Activated CD4-positive, alpha-beta T cell treated with anti-CD3 and anti-CD28 coated beads, Interleukin-2, amount 10 ng/mL, durations not matched to agents 24 days and 14 days (primary cell): ENCODE measurements at regions of chr21 and their contacts with region 1.

Region 1: DNA sequence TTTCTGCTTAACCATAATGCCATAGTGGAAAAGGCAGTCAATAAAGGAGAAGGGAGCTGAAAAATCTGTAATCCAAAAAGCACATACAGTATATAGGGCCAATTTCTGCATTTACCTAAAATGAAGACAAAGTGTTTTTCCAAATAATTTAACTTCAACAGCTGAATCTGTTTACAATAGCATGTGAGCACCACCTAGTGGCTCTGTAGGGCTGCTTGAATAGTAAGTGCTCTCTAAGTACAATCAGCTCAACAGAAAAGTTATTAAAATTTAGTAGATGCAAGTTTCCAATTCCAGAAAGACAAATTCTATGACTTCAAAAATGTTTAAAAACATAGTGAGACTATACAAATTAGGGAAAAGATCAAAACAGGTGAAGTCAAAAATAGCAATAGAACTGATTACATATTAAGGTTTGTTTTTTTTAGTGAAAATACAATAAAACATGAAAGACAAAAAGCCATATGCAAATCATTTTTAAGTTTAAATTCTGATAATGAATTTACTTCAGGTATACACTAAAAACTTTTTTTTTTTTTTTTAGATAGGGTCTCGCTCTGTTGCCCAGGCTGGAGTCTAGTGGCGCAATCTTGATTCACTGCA is 220.0 kb downstream of the SETD4 start:
- DNase-seq: peak; percentile 84
- H3K4me3 Mint-ChIP-seq: no peak overlapping the region
- H3K27ac Mint-ChIP-seq: no peak overlapping the region
- H3K4me1 Mint-ChIP-seq: no peaks in the 10 kb centered on the region
- H3K27me3 Mint-ChIP-seq: peaks cover 2% of the 10 kb centered on the region

Region 2: DNA sequence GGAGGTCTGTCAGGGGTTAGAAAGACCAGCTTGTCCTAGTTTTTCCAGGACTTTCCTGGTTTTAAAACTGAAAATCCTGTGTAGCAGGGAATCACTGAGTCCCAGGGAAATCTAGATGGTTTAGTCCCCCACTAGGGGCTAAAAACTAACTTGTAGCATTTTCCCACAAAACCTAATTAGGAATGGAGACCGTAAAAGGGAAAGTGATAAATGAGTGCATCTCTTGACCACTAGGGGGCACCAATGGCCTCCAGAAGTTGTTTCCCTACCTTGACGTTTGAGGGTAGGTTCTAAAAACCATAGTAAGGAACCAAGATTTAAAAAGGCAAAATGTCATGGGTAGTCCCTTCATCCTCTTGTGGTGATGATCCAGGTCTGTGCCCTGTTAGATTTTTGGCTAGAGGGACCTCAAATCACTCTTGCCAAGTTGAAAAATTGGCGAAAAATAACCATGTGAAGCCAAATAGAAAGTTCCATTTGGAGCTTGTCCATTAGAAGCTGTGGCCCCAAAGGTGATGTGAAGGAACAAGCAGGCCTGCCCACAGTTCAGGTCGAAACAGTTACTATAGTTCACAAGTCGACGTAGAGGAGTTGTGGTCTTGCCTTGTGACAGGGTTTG is 1147.0 kb before region 1 on chr21:
- intact Hi-C with region 1: loop called (anchors 2 kb)
- DNase-seq: peak; percentile 83
- H3K4me3 Mint-ChIP-seq: no peak overlapping the region
- H3K27ac Mint-ChIP-seq: no peak overlapping the region
- H3K4me1 Mint-ChIP-seq: peaks cover 2% of the 10 kb centered on the region
- H3K27me3 Mint-ChIP-seq: peaks cover 38% of the 10 kb centered on the region

Region 3: DNA sequence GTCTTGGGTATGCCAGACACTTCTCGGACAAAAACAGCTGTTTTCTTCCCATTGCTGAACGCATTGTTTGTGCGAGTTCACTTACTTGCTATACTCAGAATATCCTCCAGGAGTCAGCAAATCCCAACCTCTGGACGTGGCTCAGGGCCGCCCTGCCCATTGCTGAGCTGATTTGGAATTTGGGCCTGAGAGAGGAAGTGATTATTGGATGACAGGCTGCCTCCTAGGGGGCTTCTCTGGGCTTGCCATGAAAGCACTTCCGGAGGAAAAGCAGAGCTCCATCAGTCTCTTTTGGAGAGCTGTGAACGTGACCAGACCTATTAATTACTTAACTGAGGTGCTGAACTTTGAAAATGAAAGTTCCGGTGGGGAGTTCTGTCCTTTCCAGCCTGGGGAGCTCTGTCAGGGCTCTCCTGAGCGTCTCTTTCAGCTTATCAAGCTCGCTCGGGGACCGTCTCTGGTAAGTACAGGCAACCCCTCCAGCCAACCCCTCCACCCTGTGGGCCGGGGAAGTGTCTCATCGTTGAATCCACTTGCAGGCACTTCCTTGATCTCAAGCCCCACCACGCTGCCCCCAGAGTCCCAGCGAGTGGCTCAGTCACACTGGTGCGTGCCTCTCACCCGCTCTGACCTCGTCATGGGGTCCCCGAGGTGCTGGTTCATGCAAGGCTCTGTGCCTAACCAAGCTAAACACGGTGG is 1094.6 kb before region 1 on chr21:
- intact Hi-C with region 1: loop called (anchors 1 kb)
- DNase-seq: peak; percentile 87
- H3K4me3 Mint-ChIP-seq: peak overlapping the region; percentile 52
- H3K27ac Mint-ChIP-seq: no peak overlapping the region
- H3K4me1 Mint-ChIP-seq: peaks cover 3% of the 10 kb centered on the region
- H3K27me3 Mint-ChIP-seq: peaks cover 18% of the 10 kb centered on the region

Region 4: GRCh38 chr21:35563885-35564451 is 276.3 kb before region 1 on chr21:
- intact Hi-C with region 1: no loop called
- DNase-seq: no peak
- H3K4me3 Mint-ChIP-seq: no peak overlapping the region
- H3K27ac Mint-ChIP-seq: no peak overlapping the region
- H3K4me1 Mint-ChIP-seq: no peaks in the 10 kb centered on the region
- H3K27me3 Mint-ChIP-seq: peaks cover 12% of the 10 kb centered on the region

Region 5: GRCh38 chr21:36369064-36369685 is 528.9 kb after region 1 on chr21:
- intact Hi-C with region 1: no loop called
- DNase-seq: no peak
- H3K4me3 Mint-ChIP-seq: no peak overlapping the region
- H3K27ac Mint-ChIP-seq: no peak overlapping the region
- H3K4me1 Mint-ChIP-seq: peaks cover 2% of the 10 kb centered on the region
- H3K27me3 Mint-ChIP-seq: no peaks in the 10 kb centered on the region